Activated CD4-positive, alpha-beta T cell treated with anti-CD3 and anti-CD28 coated beads for 36 hours (primary cell): ENCODE measurements at regions of chr13 and their contacts with region 1.

Region 1: GRCh38 chr13:36736119-36736726 is 62.4 kb downstream of the SERTM1 start:
- DNase-seq: peak; percentile 57
- ATAC-seq: no peak
- H3K4me3 Mint-ChIP-seq: no peak overlapping the region
- H3K27ac Mint-ChIP-seq: no peak overlapping the region
- H3K4me1 Mint-ChIP-seq: no peaks in the 10 kb centered on the region
- H3K27me3 Mint-ChIP-seq: peaks cover 5% of the 10 kb centered on the region

Region 2: GRCh38 chr13:36420437-36420891 is 315.8 kb before region 1 on chr13:
- CTCF ChIA-PET with region 1: interaction called, 30 read pairs
- POLR2A ChIA-PET with region 1: no interaction called
- intact Hi-C with region 1: loop called (anchors 1 kb)
- DNase-seq: peak; percentile 82
- ATAC-seq: peak; percentile 74
- H3K4me3 Mint-ChIP-seq: no peak overlapping the region
- H3K27ac Mint-ChIP-seq: peak overlapping the region; percentile 75
- H3K4me1 Mint-ChIP-seq: peaks cover 27% of the 10 kb centered on the region
- H3K27me3 Mint-ChIP-seq: peaks cover 48% of the 10 kb centered on the region

Region 3: DNA sequence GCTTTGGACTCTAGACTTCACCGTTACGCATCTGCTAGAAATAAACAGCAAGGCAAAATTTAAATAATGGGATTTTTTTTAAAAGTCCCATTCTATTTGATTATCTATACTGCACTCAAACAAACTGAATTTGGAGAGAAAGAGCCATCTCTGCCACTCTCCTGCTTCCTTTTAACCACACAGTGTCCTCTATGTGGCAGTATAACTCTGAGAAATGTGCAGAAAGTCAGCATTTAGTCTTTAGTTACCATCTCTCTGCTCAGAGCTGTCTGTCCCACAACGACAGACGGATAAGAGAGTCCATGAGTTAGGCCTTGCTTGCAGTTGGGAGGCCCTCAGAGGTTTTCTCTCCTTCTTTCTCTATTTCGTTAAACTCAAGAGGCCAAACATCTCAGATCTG is 282.7 kb before region 1 on chr13:
- CTCF ChIA-PET with region 1: interaction called, 6 read pairs
- POLR2A ChIA-PET with region 1: no interaction called
- intact Hi-C with region 1: loop called in 1 of 2 experiments (anchors 10 kb)
- DNase-seq: no peak
- ATAC-seq: no peak
- H3K4me3 Mint-ChIP-seq: no peak overlapping the region
- H3K27ac Mint-ChIP-seq: no peak overlapping the region
- H3K4me1 Mint-ChIP-seq: no peaks in the 10 kb centered on the region
- H3K27me3 Mint-ChIP-seq: peaks cover 10% of the 10 kb centered on the region

Region 4: DNA sequence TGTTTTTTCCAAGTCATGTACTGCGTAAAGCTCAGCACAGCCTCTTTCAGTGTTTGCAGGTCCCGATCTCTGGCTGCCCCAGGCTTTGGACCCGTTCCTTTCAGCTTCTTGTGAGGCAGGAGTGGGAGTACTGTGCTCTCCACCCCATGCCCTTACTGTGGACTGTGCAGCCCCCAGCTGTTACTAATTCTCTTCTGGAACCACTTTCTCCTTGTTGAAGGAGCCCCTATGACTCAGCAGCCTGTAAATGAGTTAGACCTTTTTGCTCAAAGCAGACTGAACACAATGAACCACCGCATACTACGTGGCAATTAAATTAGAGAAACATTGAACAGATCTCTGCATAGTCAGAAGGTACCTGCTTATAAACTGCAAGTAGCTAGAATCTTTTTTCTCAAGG is 23.5 kb before region 1 on chr13:
- CTCF ChIA-PET with region 1: interaction called, 12 read pairs
- POLR2A ChIA-PET with region 1: no interaction called
- intact Hi-C with region 1: no loop called
- DNase-seq: no peak
- ATAC-seq: no peak
- H3K4me3 Mint-ChIP-seq: no peak overlapping the region
- H3K27ac Mint-ChIP-seq: no peak overlapping the region
- H3K4me1 Mint-ChIP-seq: no peaks in the 10 kb centered on the region
- H3K27me3 Mint-ChIP-seq: peaks cover 18% of the 10 kb centered on the region